ENCODE measurements at regions of chr2 and their contacts with region 1.

Region 1: DNA sequence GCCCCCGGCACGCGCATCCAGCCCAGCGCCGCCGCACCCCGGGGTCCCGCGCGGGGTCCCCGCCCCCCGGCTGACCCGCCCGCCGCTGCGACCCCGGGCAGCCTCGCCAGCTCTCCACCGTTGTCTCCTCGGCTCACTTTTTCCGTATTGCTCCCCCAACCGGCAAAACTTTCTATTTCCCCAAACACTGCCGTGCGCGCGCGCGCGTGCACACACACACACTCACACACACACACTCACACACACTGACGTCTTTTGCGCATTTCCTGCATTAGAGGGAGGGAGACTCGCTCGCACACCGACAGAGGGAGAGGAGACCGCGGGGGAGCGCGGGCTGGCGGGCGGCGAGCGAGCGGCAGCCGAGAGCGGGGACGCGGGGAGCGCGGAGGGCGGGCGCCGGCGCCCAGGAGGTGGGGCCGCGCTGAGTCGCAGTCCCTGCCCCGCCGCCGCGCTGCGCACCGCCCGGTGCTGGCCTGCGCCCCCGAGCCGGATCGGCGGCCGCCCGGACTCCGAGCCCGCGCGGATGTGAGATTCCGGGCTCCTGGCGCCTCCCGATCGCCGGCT is 542 bp upstream of the PRKCE start:
- DNase-seq: peak; percentile 98 to 99 (median 98)
- H3K4me3 ChIP-seq: peak overlapping the region; percentile 47 to 92 (median 88)
- H3K27ac ChIP-seq: peak overlapping the region; percentile 54 to 73
- H3K4me1 ChIP-seq: peaks cover 3 to 32% (median 25%) of the 10 kb centered on the region in 4 experiments
- H3K27me3 ChIP-seq: no peaks in the 10 kb centered on the region

Region 2: DNA sequence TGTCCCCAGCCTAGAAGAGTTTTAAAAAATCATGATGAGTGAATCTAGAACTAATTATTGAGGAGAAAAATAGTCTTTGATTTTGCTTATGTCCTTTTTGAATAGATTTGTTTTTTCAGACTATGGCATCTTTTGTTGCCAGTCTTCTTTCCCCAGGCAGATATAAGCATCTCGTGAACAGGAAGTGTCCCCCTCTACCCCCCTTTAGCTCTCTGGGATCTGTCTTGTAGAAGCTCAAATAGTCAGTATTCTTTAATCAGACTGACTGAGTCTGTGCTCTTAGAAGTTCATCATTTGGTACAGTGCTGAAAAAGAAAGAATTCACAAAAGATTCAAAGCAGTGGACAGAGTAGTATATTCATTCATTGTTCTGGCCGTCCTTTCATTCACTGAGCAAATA is 10.9 kb after region 1 on chr2:
- CTCF ChIA-PET with region 1: interaction called, 12 read pairs
- POLR2A ChIA-PET with region 1: no interaction called
- DNase-seq: no peak
- H3K4me3 ChIP-seq: no peak overlapping the region
- H3K27ac ChIP-seq: no peak overlapping the region
- H3K4me1 ChIP-seq: peaks cover 0 to 10% (median 3%) of the 10 kb centered on the region in 4 experiments
- H3K27me3 ChIP-seq: no peaks in the 10 kb centered on the region

Region 3: GRCh38 chr2:45778720-45779171 is 127.8 kb after region 1 on chr2:
- CTCF ChIA-PET with region 1: interaction called, 52 read pairs
- POLR2A ChIA-PET with region 1: interaction called, 3 read pairs
- DNase-seq: peak; percentile 81 to 86 (median 82)
- H3K4me3 ChIP-seq: peak overlapping the region in 4 of 7 experiments; percentile 37 to 73 (median 45)
- H3K27ac ChIP-seq: no peak overlapping the region
- H3K4me1 ChIP-seq: peaks cover 0 to 19% (median 11%) of the 10 kb centered on the region in 4 experiments
- H3K27me3 ChIP-seq: no peaks in the 10 kb centered on the region